Naive thymus-derived CD4-positive, alpha-beta T cell (primary cell): ENCODE measurements at regions of chr12 and their contacts with region 1.

Region 1: GRCh38 chr12:105053116-105053572 is 31.1 kb downstream of the ALDH1L2 start:
- DNase-seq: peak; percentile 35 to 76 (median 67)
- ATAC-seq: peak; percentile 94
- H3K4me3 ChIP-seq: no peak overlapping the region
- H3K4me3 Mint-ChIP-seq: no peak overlapping the region
- H3K27ac ChIP-seq: no peak overlapping the region
- H3K27ac Mint-ChIP-seq: no peak overlapping the region
- H3K4me1 ChIP-seq: no peaks in the 10 kb centered on the region
- H3K4me1 Mint-ChIP-seq: peaks cover 0 to 5% (median 0%) of the 10 kb centered on the region in 7 donors
- H3K27me3 ChIP-seq: no peaks in the 10 kb centered on the region
- H3K27me3 Mint-ChIP-seq: peaks cover 0 to 7% (median 0%) of the 10 kb centered on the region in 5 donors

Region 2: DNA sequence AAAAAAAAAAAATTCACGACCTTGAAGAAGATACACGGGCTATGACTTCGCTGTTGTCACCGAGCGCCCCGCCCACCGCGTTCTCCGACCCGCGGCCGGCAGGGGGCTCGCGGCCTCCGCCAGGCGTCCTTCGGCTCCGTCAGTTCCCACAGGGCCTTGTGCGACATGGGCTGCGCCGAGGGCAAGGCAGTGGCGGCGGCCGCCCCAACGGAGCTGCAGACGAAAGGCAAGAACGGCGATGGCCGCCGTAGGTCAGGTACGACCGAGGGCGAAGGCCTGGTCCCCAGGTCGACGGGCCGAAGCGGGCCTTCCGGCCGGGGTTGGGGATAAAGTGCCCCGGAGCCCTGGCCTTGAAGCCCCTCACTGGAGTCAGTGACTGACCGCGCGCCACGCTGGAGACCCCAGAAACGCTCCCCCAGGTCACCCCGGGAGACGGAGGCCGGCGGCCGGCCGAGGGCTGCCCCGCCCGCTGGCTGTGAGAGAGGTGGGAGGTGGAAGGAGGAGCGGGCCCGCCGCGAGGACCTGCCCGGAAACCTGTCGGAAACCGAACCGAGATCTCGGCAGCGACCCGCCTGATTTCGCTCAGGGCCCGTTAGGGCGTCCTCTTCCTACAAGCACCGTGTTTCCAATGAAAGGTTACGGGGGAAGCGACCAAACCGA is 837.4 kb before region 1 on chr12 and contains the start of gene TXNRD1:
- CTCF ChIA-PET with region 1: no interaction called
- POLR2A ChIA-PET with region 1: no interaction called
- intact Hi-C with region 1: loop called in 1 of 2 experiments (anchors 5 kb)
- DNase-seq: peak; percentile 70 to 84 (median 81)
- ATAC-seq: peak; percentile 97
- H3K4me3 ChIP-seq: peak within 1 kb of the TSS; percentile 69
- H3K4me3 Mint-ChIP-seq: peak within 1 kb of the TSS; percentile 79 to 89 (median 84)
- H3K27ac ChIP-seq: peak within 1 kb of the TSS; percentile 64
- H3K27ac Mint-ChIP-seq: peak within 1 kb of the TSS; percentile 64 to 86 (median 72)
- H3K4me1 ChIP-seq: peaks cover 0 to 5% of the 10 kb centered on the region in 2 donors
- H3K4me1 Mint-ChIP-seq: peaks cover 15 to 41% (median 26%) of the 10 kb centered on the region in 7 donors
- H3K27me3 ChIP-seq: no peaks in the 10 kb centered on the region
- H3K27me3 Mint-ChIP-seq: peaks cover 0 to 8% (median 0%) of the 10 kb centered on the region in 5 donors
- total RNA-seq, gene TXNRD1: 19.1 to 73.5 (median 41.7) TPM

Region 3: GRCh38 chr12:104604070-104604994 is 448.8 kb before region 1 on chr12:
- CTCF ChIA-PET with region 1: no interaction called
- POLR2A ChIA-PET with region 1: no interaction called
- intact Hi-C with region 1: no loop called
- DNase-seq: peak in 5 of 9 donors; percentile 7 to 54 (median 13)
- ATAC-seq: peak; percentile 82
- H3K4me3 ChIP-seq: no peak overlapping the region
- H3K4me3 Mint-ChIP-seq: peak overlapping the region in 4 of 10 donors; percentile 23 to 66 (median 28)
- H3K27ac ChIP-seq: no peak overlapping the region
- H3K27ac Mint-ChIP-seq: peak overlapping the region in 8 of 9 donors; percentile 15 to 91 (median 43)
- H3K4me1 ChIP-seq: peaks cover 10 to 16% of the 10 kb centered on the region in 2 donors
- H3K4me1 Mint-ChIP-seq: peaks cover 37 to 79% (median 64%) of the 10 kb centered on the region in 7 donors
- H3K27me3 ChIP-seq: no peaks in the 10 kb centered on the region
- H3K27me3 Mint-ChIP-seq: no peaks in the 10 kb centered on the region

Region 4: GRCh38 chr12:104680066-104680465 is 373.1 kb before region 1 on chr12:
- CTCF ChIA-PET with region 1: no interaction called
- POLR2A ChIA-PET with region 1: no interaction called
- intact Hi-C with region 1: loop called in 1 of 2 experiments (anchors 1 kb)
- DNase-seq: peak in 7 of 9 donors; percentile 15 to 51 (median 30)
- ATAC-seq: peak; percentile 44
- H3K4me3 ChIP-seq: no peak overlapping the region
- H3K4me3 Mint-ChIP-seq: peak overlapping the region in 3 of 10 donors; percentile 16 to 36 (median 26)
- H3K27ac ChIP-seq: no peak overlapping the region
- H3K27ac Mint-ChIP-seq: peak overlapping the region in 3 of 9 donors; percentile 15 to 80 (median 26)
- H3K4me1 ChIP-seq: peaks cover 25 to 46% of the 10 kb centered on the region in 2 donors
- H3K4me1 Mint-ChIP-seq: peaks cover 36 to 80% (median 46%) of the 10 kb centered on the region in 7 donors
- H3K27me3 ChIP-seq: no peaks in the 10 kb centered on the region
- H3K27me3 Mint-ChIP-seq: no peaks in the 10 kb centered on the region

Region 5: DNA sequence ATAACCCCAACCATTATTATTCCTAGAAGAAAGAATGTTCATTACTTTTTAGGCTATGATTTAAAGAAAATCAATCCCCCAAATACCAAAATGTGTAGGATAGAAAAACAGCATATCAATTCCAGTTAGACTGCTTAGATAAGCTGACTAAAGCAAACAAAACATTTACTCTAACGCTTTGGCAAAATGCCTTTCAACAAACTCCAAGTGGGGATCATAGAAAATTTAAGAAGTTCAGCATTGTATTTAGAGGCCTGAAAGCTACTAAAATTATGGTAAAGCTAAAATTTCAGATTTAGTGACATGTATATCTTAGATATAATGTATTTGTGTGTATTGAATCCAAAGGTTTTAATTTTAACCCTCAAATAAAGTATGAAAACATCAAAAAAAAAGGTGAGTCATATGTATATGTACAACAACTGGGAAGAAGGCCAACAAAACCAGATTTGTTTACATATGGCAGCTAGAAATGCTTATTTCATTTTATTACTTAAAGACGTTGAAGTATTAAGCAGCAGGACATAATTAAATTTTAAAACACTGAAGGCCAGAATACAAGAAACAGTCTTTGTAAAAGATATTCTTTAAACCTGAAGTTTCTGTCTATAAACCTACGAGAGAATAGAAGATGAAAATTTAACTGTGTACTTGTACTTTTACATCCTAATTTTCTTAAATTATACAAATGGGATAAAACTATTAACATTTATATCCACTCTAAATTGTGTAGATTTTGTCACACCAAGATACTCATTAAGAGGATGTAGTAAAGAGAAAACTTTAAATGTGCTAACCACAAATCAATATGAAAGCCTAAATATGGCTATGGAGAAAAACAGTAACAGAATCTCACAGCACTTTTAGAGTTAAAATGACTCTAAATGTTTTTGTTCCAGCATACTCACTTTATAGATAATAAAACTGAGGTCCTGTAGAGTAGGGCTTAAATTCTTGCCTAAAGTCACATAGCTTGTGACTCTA is 166.4 kb before region 1 on chr12:
- CTCF ChIA-PET with region 1: interaction called, 3 read pairs
- POLR2A ChIA-PET with region 1: no interaction called
- intact Hi-C with region 1: loop called in 1 of 2 experiments (anchors 5 kb)
- DNase-seq: no peak
- ATAC-seq: no peak
- H3K4me3 ChIP-seq: no peak overlapping the region
- H3K4me3 Mint-ChIP-seq: no peak overlapping the region
- H3K27ac ChIP-seq: no peak overlapping the region
- H3K27ac Mint-ChIP-seq: no peak overlapping the region
- H3K4me1 ChIP-seq: no peaks in the 10 kb centered on the region
- H3K4me1 Mint-ChIP-seq: peaks cover 0 to 3% (median 0%) of the 10 kb centered on the region in 7 donors
- H3K27me3 ChIP-seq: no peaks in the 10 kb centered on the region
- H3K27me3 Mint-ChIP-seq: peaks cover 2 to 30% (median 4%) of the 10 kb centered on the region in 5 donors

Region 6: DNA sequence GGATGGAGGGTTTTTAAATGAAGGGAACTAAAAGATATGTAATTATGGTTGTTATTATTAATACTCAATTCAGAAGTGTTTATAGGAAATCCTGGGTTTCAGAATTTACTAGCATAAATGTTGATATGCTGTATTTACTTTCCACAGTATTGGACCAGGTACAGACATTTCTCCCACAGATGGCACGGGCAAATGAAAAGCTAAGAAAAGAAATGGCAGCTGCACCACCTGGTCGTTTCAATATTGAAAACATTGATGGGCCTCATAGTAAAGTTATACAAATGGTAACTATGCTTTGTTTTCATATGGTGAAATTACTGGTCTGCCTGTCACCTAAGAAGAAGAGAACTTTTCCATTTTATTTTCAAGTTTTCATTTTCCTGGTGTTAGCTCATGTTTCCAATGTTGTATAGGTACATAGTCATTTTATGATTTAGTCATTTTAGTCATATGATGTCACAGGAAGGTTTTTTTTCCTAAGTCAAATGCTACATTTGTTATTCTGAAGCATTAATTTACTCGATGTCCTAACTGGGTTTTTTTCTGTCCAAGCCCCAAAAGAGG is 61.5 kb before region 1 on chr12:
- CTCF ChIA-PET with region 1: interaction called, 11 read pairs
- POLR2A ChIA-PET with region 1: no interaction called
- intact Hi-C with region 1: loop called (anchors 5 kb)
- DNase-seq: no peak
- ATAC-seq: no peak
- H3K4me3 ChIP-seq: no peak overlapping the region
- H3K4me3 Mint-ChIP-seq: no peak overlapping the region
- H3K27ac ChIP-seq: no peak overlapping the region
- H3K27ac Mint-ChIP-seq: no peak overlapping the region
- H3K4me1 ChIP-seq: peaks cover 11 to 12% of the 10 kb centered on the region in 2 donors
- H3K4me1 Mint-ChIP-seq: peaks cover 13 to 31% (median 28%) of the 10 kb centered on the region in 7 donors
- H3K27me3 ChIP-seq: no peaks in the 10 kb centered on the region
- H3K27me3 Mint-ChIP-seq: no peaks in the 10 kb centered on the region

Region 7: DNA sequence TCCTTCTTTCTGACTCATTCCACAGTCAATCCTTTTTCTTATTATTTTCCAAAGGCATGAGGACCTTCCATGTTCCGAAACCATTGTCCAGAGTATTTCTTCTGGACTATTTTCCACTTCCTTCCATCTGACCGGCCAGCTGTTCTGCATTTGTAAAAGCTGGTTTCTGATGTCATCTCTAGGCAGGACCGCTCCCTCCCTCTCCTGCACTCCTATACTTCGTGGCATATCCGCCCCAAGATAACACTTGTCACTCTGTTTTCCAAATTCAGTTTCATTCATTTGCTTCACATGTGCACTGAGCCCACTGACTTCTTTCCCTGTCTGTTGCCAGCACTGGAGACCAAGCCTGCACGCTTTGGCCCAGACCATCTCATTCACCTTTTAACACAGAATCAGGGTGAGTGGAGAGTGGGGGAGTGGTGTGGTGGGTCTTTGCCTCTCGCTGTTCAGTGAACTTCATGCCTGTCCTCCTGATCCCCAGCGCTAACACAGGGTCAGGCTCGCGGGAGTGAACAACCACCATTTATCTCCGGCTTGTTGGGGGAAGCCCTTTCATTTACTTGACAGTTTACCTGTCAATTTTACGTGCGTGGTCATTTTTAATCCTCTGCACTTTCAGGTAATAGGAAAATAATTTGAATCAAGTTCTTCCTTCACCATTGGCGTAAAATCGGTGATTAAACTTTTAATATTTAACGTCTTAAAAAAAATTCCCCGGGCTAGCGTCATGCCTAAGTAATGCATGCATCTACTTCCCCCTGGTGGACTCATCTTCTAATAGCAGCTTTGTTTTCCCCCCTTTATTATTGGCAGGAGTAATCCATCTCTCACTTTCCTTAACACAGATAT is 329.9 kb after region 1 on chr12:
- CTCF ChIA-PET with region 1: no interaction called
- POLR2A ChIA-PET with region 1: no interaction called
- intact Hi-C with region 1: loop called (anchors 1 to 5 kb)
- DNase-seq: peak in 7 of 9 donors; percentile 29 to 65 (median 51)
- ATAC-seq: peak; percentile 73
- H3K4me3 ChIP-seq: no peak overlapping the region
- H3K4me3 Mint-ChIP-seq: no peak overlapping the region
- H3K27ac ChIP-seq: no peak overlapping the region
- H3K27ac Mint-ChIP-seq: no peak overlapping the region
- H3K4me1 ChIP-seq: no peaks in the 10 kb centered on the region
- H3K4me1 Mint-ChIP-seq: no peaks in the 10 kb centered on the region
- H3K27me3 ChIP-seq: no peaks in the 10 kb centered on the region
- H3K27me3 Mint-ChIP-seq: no peaks in the 10 kb centered on the region